ENCODE measurements at regions of chr5 and their contacts with region 1.

Region 1: GRCh38 chr5:149731639-149732323 is 1.7 kb downstream of the PPARGC1B start:
- DNase-seq: peak; percentile 44
- H3K4me3 Mint-ChIP-seq: peak overlapping the region; percentile 82
- H3K27ac Mint-ChIP-seq: no peak overlapping the region
- H3K4me1 Mint-ChIP-seq: peaks cover 2% of the 10 kb centered on the region
- H3K27me3 Mint-ChIP-seq: peaks cover 15% of the 10 kb centered on the region

Region 2: DNA sequence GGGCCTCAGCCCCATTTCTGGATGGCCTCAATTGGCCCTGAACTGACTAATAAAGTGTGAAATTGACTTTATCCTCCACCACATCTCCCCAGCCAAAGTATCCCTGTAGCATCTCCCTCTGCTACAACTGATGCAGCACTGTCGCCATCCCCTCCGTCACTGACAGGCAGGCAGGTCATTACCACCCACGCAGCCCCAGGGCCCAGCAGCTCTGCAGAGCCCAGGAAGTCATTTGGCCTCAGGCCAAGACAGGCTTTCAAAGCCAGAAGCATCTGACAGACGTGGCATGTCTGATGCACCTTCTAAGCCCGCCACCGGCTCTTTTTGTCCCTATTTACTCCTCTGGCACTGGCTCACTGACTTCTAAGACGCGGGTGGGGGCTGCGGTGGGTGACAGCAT is 85.2 kb before region 1 on chr5:
- intact Hi-C with region 1: loop called (anchors 5 kb)
- DNase-seq: no peak
- H3K4me3 Mint-ChIP-seq: no peak overlapping the region
- H3K27ac Mint-ChIP-seq: no peak overlapping the region
- H3K4me1 Mint-ChIP-seq: no peaks in the 10 kb centered on the region
- H3K27me3 Mint-ChIP-seq: no peaks in the 10 kb centered on the region